ENCODE measurements at regions of chr1 and their contacts with region 1.

Region 1: DNA sequence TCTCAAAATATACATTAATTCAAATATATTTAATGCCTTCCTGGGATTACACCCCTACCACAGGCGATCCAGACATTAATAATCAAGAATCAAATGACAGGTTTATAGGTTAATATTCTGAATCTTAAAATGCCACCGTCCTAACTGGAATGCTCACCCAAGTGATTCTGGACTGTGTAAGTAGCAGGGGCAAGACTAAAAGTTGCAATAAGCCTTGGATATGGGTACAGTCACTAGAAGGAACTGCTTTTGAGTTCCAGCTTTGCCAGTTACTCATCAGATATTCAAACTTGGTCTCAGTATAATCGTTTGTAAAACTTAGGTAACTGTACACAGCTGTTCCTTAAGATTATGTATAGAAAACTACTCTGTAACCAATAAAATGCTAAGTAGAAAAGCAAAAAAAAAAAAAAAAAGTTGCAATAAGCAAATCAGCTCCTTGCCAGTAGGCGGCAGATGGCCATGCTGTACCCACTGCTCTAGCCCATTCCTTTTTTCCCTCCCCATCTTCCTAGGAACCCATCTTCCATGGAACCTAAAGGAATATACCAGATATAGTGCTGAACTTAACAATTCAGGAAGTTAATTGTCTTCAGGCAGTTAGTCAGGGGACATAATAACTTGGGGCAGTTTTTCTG is 10.5 kb downstream of the RO60 start:
- DNase-seq: no peak
- ATAC-seq: peak; percentile 27
- H3K4me3 ChIP-seq: no peak overlapping the region
- H3K4me3 Mint-ChIP-seq: peak overlapping the region in 2 of 10 donors; percentile 3 to 30
- H3K27ac ChIP-seq: no peak overlapping the region
- H3K27ac Mint-ChIP-seq: peak overlapping the region in 8 of 9 donors; percentile 5 to 83 (median 72)
- H3K4me1 ChIP-seq: peaks cover 8 to 25% of the 10 kb centered on the region in 2 donors
- H3K4me1 Mint-ChIP-seq: peaks cover 31 to 69% (median 57%) of the 10 kb centered on the region in 7 donors
- H3K27me3 ChIP-seq: no peaks in the 10 kb centered on the region
- H3K27me3 Mint-ChIP-seq: no peaks in the 10 kb centered on the region

Region 2: GRCh38 chr1:193085263-193085662 is 15.4 kb after region 1 on chr1:
- CTCF ChIA-PET with region 1: no interaction called
- POLR2A ChIA-PET with region 1: no interaction called
- intact Hi-C with region 1: loop called in 1 of 2 experiments (anchors 1 kb)
- DNase-seq: no peak
- ATAC-seq: no peak
- H3K4me3 ChIP-seq: no peak overlapping the region
- H3K4me3 Mint-ChIP-seq: no peak overlapping the region
- H3K27ac ChIP-seq: no peak overlapping the region
- H3K27ac Mint-ChIP-seq: peak overlapping the region in 1 of 9 donors; percentile 57
- H3K4me1 ChIP-seq: no peaks in the 10 kb centered on the region
- H3K4me1 Mint-ChIP-seq: no peaks in the 10 kb centered on the region
- H3K27me3 ChIP-seq: no peaks in the 10 kb centered on the region
- H3K27me3 Mint-ChIP-seq: no peaks in the 10 kb centered on the region